ENCODE measurements at regions of chrX and their contacts with region 1.

Region 1: DNA sequence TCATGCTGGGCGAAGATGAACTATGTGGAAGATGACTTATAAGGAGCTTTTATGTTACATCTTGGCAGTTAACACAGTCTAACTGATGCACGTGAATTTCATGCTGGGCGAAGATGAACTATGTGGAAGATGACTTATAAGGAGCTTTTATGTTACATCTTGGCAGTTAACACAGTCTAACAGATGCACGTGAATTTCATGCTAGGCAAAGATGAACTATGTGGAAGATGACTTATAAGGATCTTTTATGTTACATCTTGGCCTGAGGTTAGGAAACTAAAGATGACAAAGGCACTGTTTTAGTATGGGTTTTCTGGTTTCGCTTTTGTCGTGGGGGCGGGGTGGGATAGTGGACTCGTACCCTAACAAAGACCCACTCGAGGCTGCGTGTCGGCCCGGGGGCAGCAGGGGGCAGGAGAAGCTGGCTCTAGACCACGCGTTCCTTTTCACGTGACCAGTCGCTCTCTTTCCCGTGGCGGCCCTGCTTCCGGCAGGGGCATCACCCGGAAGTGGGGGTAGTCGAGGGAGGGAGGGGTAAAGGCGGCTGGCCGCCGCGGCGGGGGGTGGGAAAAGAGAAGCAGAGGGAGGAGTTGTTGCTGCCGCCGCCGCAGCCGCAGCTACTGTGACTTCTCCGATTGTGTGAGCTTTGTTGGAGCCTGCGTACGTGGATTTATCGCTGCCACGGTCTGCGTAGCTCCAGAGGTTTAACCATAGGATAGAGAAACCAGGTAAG is at the start of gene ATP7A:
- DNase-seq: peak; percentile 70 to 94
- H3K4me3 ChIP-seq: peak within 1 kb of the TSS; percentile 47 to 67
- H3K27ac ChIP-seq: peak within 1 kb of the TSS; percentile 67 to 73
- H3K4me1 ChIP-seq: peaks cover 0 to 3% of the 10 kb centered on the region in 2 donors
- H3K27me3 ChIP-seq: no peaks in the 10 kb centered on the region
- CTCF ChIP-seq: peak; percentile 49 to 54 (median 51)
- total RNA-seq, gene ATP7A: 7.5 TPM

Region 2: GRCh38 chrX:78029663-78030062 is 119.4 kb after region 1 on chrX:
- intact Hi-C with region 1: loop called (anchors 5 kb)
- DNase-seq: no peak
- H3K4me3 ChIP-seq: no peak overlapping the region
- H3K27ac ChIP-seq: no peak overlapping the region
- H3K4me1 ChIP-seq: no peaks in the 10 kb centered on the region
- H3K27me3 ChIP-seq: no peaks in the 10 kb centered on the region
- CTCF ChIP-seq: peak in 2 of 3 experiments; percentile 28 to 54